ENCODE measurements at regions of chr11 and their contacts with region 1.

Region 1: GRCh38 chr11:44621140-44621681 is 55.7 kb downstream of the CD82 start:
- DNase-seq: peak; percentile 74 to 85
- ATAC-seq: peak; percentile 58 to 87 (median 76)
- H3K4me3 ChIP-seq: no peak overlapping the region
- H3K27ac ChIP-seq: no peak overlapping the region
- H3K4me1 ChIP-seq: peaks cover 3% of the 10 kb centered on the region
- H3K27me3 ChIP-seq: no peaks in the 10 kb centered on the region
- CTCF ChIP-seq: peak; percentile 94

Region 2: GRCh38 chr11:44556735-44557409 is 64.3 kb before region 1 on chr11:
- intact Hi-C with region 1: loop called (anchors 1 kb)
- DNase-seq: peak; percentile 49 to 78
- ATAC-seq: peak; percentile 78 to 95 (median 84)
- H3K4me3 ChIP-seq: no peak overlapping the region
- H3K27ac ChIP-seq: no peak overlapping the region
- H3K4me1 ChIP-seq: peaks cover 4% of the 10 kb centered on the region
- H3K27me3 ChIP-seq: peaks cover 0 to 1% (median 0%) of the 10 kb centered on the region in 3 donors
- CTCF ChIP-seq: peak; percentile 80

Region 3: GRCh38 chr11:44727373-44728287 is 106.4 kb after region 1 on chr11:
- intact Hi-C with region 1: loop called in 1 of 2 experiments (anchors 2 kb)
- DNase-seq: peak; percentile 85 to 88
- ATAC-seq: peak; percentile 86 to 94 (median 91)
- H3K4me3 ChIP-seq: peak overlapping the region; percentile 72
- H3K27ac ChIP-seq: peak overlapping the region; percentile 46
- H3K4me1 ChIP-seq: no peaks in the 10 kb centered on the region
- H3K27me3 ChIP-seq: peaks cover 0 to 46% (median 2%) of the 10 kb centered on the region in 3 donors
- CTCF ChIP-seq: peak; percentile 95

Region 4: GRCh38 chr11:44775366-44775984 is 154.3 kb after region 1 on chr11:
- intact Hi-C with region 1: loop called (anchors 5 kb)
- DNase-seq: peak; percentile 48 to 67
- ATAC-seq: peak; percentile 60 to 79 (median 76)
- H3K4me3 ChIP-seq: no peak overlapping the region
- H3K27ac ChIP-seq: no peak overlapping the region
- H3K4me1 ChIP-seq: no peaks in the 10 kb centered on the region
- H3K27me3 ChIP-seq: peaks cover 0 to 5% (median 0%) of the 10 kb centered on the region in 3 donors
- CTCF ChIP-seq: peak; percentile 62

Region 5: GRCh38 chr11:44893846-44894617 is 272.8 kb after region 1 on chr11:
- intact Hi-C with region 1: loop called in 1 of 2 experiments (anchors 5 kb)
- DNase-seq: peak; percentile 65 to 69
- ATAC-seq: peak; percentile 67 to 87 (median 80)
- H3K4me3 ChIP-seq: no peak overlapping the region
- H3K27ac ChIP-seq: no peak overlapping the region
- H3K4me1 ChIP-seq: peaks cover 8% of the 10 kb centered on the region
- H3K27me3 ChIP-seq: peaks cover 0 to 35% (median 2%) of the 10 kb centered on the region in 3 donors
- CTCF ChIP-seq: peak; percentile 68

Region 6: GRCh38 chr11:44911029-44911814 is 290.0 kb after region 1 on chr11:
- intact Hi-C with region 1: loop called (anchors 1 to 5 kb)
- DNase-seq: peak; percentile 73 to 82
- ATAC-seq: peak; percentile 81 to 92 (median 86)
- H3K4me3 ChIP-seq: no peak overlapping the region
- H3K27ac ChIP-seq: no peak overlapping the region
- H3K4me1 ChIP-seq: no peaks in the 10 kb centered on the region
- H3K27me3 ChIP-seq: peaks cover 0 to 3% (median 0%) of the 10 kb centered on the region in 3 donors
- CTCF ChIP-seq: peak; percentile 90

Region 7: DNA sequence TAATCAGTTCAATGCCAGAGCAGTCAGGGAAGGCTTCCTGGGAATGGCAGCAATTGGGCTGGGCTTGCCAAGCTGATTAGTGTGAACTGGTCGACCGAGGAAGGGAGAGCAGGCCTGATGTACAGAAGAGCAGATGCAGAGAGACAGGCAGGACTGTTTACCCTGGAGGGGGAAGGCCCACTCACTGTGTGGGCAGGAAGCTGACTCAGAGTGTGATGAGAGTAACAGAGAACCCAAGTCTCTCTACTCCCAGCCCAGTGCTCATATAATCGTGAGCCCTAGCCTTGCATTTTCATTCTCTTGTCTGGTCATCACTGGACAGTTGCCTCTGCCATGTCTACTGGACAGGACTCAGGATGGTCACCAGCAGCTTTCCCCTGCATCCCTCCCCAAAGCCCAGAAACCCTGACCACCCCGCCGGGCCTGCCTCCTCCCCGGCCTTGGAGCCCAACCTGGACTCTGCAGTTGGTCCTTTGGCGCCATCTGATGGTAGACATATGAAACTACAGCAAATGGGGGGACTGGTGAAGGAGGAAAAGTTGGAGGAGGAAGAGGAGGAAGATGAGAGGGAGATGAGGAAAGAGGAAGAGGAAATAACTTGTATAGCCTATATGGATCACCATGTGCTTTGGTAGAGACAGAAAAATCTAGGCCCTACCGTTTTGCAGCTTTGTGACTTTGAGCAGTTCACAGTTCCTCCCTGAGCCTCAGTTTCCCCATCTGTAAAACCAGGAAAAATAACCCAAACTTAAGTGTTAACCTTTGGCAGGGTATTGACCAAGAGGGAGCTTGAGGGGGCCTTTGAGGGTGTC is 481.8 kb after region 1 on chr11:
- intact Hi-C with region 1: loop called in 1 of 2 experiments (anchors 5 kb)
- DNase-seq: peak; percentile 59 to 74
- ATAC-seq: peak; percentile 65 to 80 (median 74)
- H3K4me3 ChIP-seq: no peak overlapping the region
- H3K27ac ChIP-seq: no peak overlapping the region
- H3K4me1 ChIP-seq: peaks cover 3% of the 10 kb centered on the region
- H3K27me3 ChIP-seq: peaks cover 0 to 2% (median 0%) of the 10 kb centered on the region in 3 donors
- CTCF ChIP-seq: peak; percentile 98